GM12878 (cell line): ENCODE measurements at regions of chr6 and their contacts with region 1.

Region 1: DNA sequence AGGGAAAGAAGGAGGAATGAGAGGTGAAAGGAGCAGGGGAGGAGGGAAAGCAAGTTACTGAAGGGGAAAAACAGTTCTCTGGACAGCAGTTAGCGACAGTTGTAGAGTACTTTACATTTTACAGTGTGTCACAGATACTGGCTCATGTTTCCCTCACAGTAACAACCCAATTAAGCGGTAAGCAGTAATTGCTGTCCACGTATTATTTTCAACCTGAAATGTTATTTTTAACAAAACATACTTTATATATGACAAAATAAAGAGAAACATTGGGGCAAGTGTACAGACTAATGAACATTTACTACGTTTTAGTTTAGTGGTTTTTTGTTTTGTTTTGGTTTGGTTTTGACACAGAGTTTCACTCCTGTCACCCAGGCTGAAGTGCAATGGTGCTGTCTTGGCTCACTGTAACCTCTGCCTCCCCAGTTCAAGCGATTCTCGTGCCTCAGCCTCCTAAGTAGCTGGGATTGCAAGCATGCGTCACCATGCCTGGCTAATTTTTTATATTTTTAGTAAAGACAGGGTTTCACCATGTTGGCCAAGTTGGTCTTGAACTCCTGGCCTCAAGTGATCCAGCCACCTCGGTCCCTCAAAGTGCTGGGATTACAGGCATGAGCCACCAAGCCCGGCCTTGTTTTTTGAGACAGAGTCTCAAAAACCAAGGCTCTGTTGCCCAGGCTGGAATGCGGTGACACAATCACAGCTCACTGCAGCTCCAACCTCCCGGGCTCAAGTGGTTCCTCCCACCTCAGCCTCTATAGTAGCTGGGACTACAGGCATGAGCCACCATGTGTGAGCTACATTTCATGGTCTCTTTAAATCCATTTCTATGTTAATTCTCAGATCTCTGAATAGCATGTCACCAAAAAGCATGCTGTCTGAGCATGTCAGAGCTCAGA is 22.6 kb upstream of the BTN3A2 start:
- DNase-seq: no peak
- ATAC-seq: peak; percentile 85
- H3K4me3 ChIP-seq: peak overlapping the region; percentile 23
- H3K27ac ChIP-seq: 0 out of 2 replicates have a peak overlapping the region, but pooled peaks have one; percentile 10
- H3K4me1 ChIP-seq: peaks cover 15% of the 10 kb centered on the region
- H3K27me3 ChIP-seq: no peaks in the 10 kb centered on the region; a peak in 1 of 4 replicates
- CTCF ChIP-seq: no peak
- EP300 ChIP-seq: no peak
- POLR2A ChIP-seq: no peak
- RAD21 ChIP-seq: no peak

Region 2: GRCh38 chr6:26216356-26216885 is 125.9 kb before region 1 on chr6:
- CTCF ChIA-PET with region 1: no interaction called
- POLR2A ChIA-PET with region 1: no interaction called
- RAD21 ChIA-PET with region 1: no interaction called
- SMC1A ChIA-PET with region 1: no interaction called
- in situ Hi-C with region 1: no loop called
- intact Hi-C with region 1: no loop called
- DNase-seq: peak; percentile 100
- ATAC-seq: peak; percentile 77
- H3K4me3 ChIP-seq: peak overlapping the region; percentile 75
- H3K27ac ChIP-seq: peak overlapping the region; percentile 93
- H3K4me1 ChIP-seq: peaks cover 12% of the 10 kb centered on the region
- H3K27me3 ChIP-seq: no peaks in the 10 kb centered on the region
- CTCF ChIP-seq: no peak
- EP300 ChIP-seq: no peak
- POLR2A ChIP-seq: peak; percentile 84
- RAD21 ChIP-seq: 0 out of 2 replicates have a peak, but pooled peaks have one; percentile 3

Region 3: DNA sequence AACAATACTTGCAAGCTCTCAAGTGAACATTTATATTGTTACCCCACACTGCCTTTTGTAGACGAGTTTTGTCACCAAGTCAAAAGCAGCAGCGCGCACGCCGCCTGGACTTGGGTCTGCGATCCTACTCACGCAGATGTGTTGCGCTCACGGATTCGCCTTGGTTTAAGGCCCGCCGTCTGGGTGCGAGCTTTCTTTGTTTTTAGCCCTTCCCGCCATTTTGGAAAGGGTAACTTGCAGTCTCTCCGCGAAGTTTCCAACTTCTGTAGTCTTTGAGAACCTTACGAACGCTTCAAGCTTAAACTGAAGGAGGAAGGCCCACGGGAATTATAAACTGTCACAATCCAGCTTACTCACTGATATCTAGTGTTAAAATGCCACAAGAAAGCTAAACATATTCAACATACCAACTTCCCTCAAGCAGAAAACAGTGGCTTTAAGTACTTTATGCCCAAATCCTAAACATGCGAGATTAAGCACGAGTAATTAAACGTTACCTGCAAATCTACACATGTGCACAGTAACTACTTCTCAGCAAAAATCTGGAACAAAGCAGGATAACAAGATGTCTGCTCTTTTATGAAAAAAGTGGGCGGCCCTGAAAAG is 57.7 kb before region 1 on chr6:
- CTCF ChIA-PET with region 1: no interaction called
- POLR2A ChIA-PET with region 1: no interaction called
- RAD21 ChIA-PET with region 1: no interaction called
- SMC1A ChIA-PET with region 1: no interaction called
- in situ Hi-C with region 1: no loop called
- intact Hi-C with region 1: no loop called
- DNase-seq: peak; percentile 47
- ATAC-seq: peak; percentile 40
- H3K4me3 ChIP-seq: peak overlapping the region; percentile 75
- H3K27ac ChIP-seq: peak overlapping the region; percentile 97
- H3K4me1 ChIP-seq: no peaks in the 10 kb centered on the region; the same call in 1 of the 2 replicates
- H3K27me3 ChIP-seq: no peaks in the 10 kb centered on the region
- CTCF ChIP-seq: no peak
- EP300 ChIP-seq: no peak
- POLR2A ChIP-seq: peak; percentile 0; the same call in 1 of the 2 replicates
- RAD21 ChIP-seq: no peak

Region 4: DNA sequence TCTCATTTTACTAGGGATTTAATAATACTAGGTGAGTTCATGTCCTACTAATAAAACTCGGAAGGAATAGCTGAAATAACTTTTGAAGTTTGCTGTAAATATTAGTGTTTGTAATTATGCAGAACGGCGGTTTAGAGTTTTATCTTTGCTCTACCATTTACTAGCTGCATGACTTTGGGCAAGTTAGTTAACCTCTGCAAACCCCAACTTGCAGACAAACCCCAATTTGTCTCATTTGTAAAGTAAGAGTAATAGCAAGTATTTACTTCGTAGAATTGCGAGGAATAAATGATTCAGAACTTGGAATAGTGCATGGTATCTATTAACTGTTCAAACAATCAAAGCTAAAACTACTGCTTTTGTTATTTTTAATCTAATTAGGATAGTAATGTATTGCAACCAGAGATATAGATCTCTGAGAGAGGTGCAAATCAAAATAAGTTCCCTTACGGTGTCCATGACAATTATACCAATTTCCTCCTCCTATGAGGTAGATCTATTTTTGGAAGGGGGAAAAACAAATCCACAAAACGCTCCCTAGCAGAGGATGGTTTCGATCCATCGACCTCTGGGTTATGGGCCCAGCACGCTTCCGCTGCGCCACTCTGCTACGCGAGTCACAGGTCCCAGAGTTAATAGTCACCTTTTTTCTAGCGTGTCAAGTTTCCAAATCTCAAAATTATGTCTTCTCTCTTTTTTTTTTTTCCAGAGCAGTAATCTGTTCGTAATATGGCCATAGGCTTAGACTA is 12.4 kb before region 1 on chr6:
- CTCF ChIA-PET with region 1: interaction called, 9 read pairs
- POLR2A ChIA-PET with region 1: interaction called, 3 read pairs
- RAD21 ChIA-PET with region 1: interaction called, 4 read pairs
- SMC1A ChIA-PET with region 1: interaction called, 37 read pairs
- in situ Hi-C with region 1: no loop called
- intact Hi-C with region 1: no loop called
- DNase-seq: no peak
- ATAC-seq: peak; percentile 54
- H3K4me3 ChIP-seq: peak overlapping the region; percentile 83
- H3K27ac ChIP-seq: no peak overlapping the region
- H3K4me1 ChIP-seq: no peaks in the 10 kb centered on the region
- H3K27me3 ChIP-seq: no peaks in the 10 kb centered on the region
- CTCF ChIP-seq: no peak
- EP300 ChIP-seq: peak in 1 of 2 experiments; percentile 57; a peak in 1 of 4 replicates
- POLR2A ChIP-seq: no peak
- RAD21 ChIP-seq: no peak

Region 5: DNA sequence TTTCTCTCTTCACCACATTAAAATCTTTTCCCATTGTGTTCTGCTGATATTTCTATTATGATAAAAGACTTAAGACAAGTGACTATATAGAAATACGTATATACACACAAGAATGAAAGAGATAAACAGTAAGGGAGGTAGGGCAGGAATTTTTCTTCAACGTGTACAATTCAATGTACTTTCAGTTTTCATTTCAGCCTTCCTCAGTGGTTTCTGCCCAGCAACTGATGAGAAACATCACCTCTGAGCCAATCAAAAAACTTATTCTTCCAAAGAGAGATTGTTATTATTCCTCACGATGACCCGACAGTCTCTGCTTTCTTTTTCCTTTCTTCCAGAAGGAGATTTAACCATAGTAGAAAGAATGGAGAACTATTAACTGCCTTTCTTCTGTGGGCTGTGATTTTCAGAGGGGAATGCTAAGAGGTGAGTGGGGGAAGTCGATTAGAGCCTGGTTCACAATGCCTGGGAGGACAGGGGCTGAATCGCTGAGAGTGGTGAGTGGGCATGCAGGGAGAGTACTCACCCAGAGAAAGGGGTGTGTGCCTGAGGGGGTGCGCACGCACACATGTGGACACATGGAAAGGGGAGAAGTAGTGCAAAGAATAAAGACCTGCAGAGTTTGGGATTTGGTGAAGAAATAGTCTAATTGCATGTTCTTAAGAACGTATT is 59.8 kb after region 1 on chr6 and contains the start of gene BTN3A1:
- CTCF ChIA-PET with region 1: no interaction called
- POLR2A ChIA-PET with region 1: no interaction called
- RAD21 ChIA-PET with region 1: interaction called, 4 read pairs
- SMC1A ChIA-PET with region 1: no interaction called
- in situ Hi-C with region 1: no loop called
- intact Hi-C with region 1: loop called (anchors 5 kb)
- DNase-seq: peak; percentile 81
- ATAC-seq: peak; percentile 97
- H3K4me3 ChIP-seq: peak within 1 kb of the TSS; percentile 85
- H3K27ac ChIP-seq: peak within 1 kb of the TSS; percentile 84
- H3K4me1 ChIP-seq: peaks cover 21% of the 10 kb centered on the region
- H3K27me3 ChIP-seq: no peaks in the 10 kb centered on the region
- CTCF ChIP-seq: no peak
- EP300 ChIP-seq: no peak; a peak in 1 of 4 replicates
- POLR2A ChIP-seq: peak; percentile 62
- RAD21 ChIP-seq: no peak
- polyA plus RNA-seq, gene BTN3A1: 5.6 TPM

Region 6: DNA sequence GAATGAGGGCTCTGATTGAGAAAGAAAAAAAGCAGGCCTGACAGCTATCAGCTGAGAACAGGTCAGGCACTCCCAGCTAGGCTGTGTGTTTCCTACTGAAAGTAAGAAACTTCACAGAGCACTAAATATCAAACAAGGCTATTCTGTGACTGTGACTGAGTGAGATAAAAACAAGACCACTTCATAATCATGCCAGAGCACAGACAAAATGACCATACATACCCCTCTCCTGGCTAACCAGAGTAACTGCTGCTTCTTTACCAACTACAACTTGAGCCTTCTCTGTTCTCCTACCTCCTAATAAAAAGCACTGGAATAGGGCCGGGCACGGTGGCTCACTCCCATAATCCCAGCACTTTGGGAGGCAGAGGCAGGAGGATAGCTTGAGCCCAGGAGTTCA is 150.9 kb after region 1 on chr6:
- CTCF ChIA-PET with region 1: interaction called, 5 read pairs
- POLR2A ChIA-PET with region 1: no interaction called
- RAD21 ChIA-PET with region 1: interaction called, 5 read pairs
- SMC1A ChIA-PET with region 1: interaction called, 5 read pairs
- in situ Hi-C with region 1: no loop called
- intact Hi-C with region 1: loop called (anchors 1 kb)
- DNase-seq: no peak
- ATAC-seq: peak; percentile 96
- H3K4me3 ChIP-seq: no peak overlapping the region
- H3K27ac ChIP-seq: no peak overlapping the region
- H3K4me1 ChIP-seq: no peaks in the 10 kb centered on the region
- H3K27me3 ChIP-seq: no peaks in the 10 kb centered on the region; a peak in 1 of 4 replicates
- CTCF ChIP-seq: peak; percentile 36 to 45 (median 43); a peak in 4 of 6 replicates
- EP300 ChIP-seq: no peak
- POLR2A ChIP-seq: no peak
- RAD21 ChIP-seq: peak; percentile 63

Region 7: GRCh38 chr6:26596579-26597388 is 254.4 kb after region 1 on chr6 and contains the start of gene ABT1:
- CTCF ChIA-PET with region 1: interaction called, 54 read pairs
- POLR2A ChIA-PET with region 1: no interaction called
- RAD21 ChIA-PET with region 1: interaction called, 14 read pairs
- SMC1A ChIA-PET with region 1: interaction called, 13 read pairs
- in situ Hi-C with region 1: no loop called
- intact Hi-C with region 1: loop called (anchors 2 kb)
- DNase-seq: peak; percentile 96
- ATAC-seq: peak; percentile 88
- H3K4me3 ChIP-seq: peak within 1 kb of the TSS; percentile 93
- H3K27ac ChIP-seq: peak within 1 kb of the TSS; percentile 85
- H3K4me1 ChIP-seq: peaks cover 18% of the 10 kb centered on the region
- H3K27me3 ChIP-seq: no peaks in the 10 kb centered on the region
- CTCF ChIP-seq: no peak
- EP300 ChIP-seq: no peak
- POLR2A ChIP-seq: peak; percentile 97
- RAD21 ChIP-seq: no peak
- polyA plus RNA-seq, gene ABT1: 8.4 to 11.3 TPM

Region 8: DNA sequence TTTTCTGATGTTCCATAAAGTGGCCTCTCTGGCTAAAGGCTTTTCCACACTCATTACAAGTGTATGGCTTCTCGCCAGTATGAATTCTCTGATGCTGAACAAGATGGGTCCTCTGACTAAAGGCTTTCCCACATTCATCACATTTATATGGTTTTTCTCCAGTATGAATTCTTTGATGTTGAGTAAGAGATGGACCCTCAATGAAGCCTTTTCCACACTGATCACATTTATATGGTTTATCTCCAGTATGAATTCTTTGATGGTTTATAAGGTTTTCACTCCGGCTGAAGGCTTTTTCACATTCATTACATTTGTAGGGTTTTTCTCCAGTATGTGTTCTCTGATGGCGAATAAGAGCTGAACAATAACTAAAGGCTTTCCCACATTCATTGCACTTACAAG is 1110.1 kb after region 1 on chr6:
- CTCF ChIA-PET with region 1: no interaction called
- POLR2A ChIA-PET with region 1: no interaction called
- RAD21 ChIA-PET with region 1: no interaction called
- SMC1A ChIA-PET with region 1: no interaction called
- in situ Hi-C with region 1: no loop called
- intact Hi-C with region 1: no loop called
- DNase-seq: no peak
- ATAC-seq: no peak
- H3K4me3 ChIP-seq: no peak overlapping the region
- H3K27ac ChIP-seq: no peak overlapping the region
- H3K4me1 ChIP-seq: no peaks in the 10 kb centered on the region
- H3K27me3 ChIP-seq: no peaks in the 10 kb centered on the region
- CTCF ChIP-seq: no peak
- EP300 ChIP-seq: no peak
- POLR2A ChIP-seq: no peak
- RAD21 ChIP-seq: no peak